ENCODE measurements at regions of chr18 and their contacts with region 1.

Region 1: DNA sequence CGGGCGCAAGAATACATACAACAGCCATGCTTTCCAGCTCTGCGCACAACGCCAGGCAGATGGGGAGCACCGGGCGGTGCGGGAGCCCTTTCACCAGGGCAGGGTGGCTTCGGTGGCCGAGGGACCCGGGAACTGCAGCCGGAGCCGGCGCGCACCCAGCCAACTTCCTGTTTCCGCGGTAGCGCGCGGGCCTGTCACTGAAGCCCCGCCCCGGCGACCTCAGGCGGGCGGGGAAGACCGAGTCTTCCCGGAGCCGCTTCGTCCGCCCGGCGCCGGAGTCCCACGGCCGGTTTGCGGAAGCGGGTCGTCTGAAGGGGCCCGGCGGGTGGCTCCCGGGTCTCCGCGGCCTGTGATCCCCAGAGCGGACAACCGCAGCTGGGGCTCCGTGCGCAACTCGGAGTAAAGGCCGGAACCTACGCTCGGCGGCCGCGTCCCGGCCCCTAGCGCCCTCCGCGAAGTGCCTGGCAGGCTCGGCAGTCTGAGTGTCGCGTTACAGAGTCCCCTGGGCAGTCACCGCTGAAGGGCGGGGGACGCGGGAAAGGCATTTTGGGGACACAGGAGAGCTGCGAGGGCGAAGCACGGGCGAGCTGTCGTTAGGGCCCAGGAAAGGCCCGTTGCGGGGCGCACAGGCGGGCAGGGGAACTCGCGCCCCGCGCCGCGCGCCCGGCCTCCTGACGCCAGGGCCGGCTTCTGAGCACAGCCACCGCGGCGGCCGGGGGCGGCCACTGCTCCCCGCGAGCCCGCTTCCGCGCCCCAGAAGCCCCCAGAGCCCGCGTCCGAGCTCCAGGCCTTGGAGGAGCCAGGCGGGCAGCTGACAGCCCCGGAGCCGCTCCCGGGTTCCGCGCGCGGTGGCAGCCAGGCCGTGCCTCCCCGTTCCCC is at the start of gene MPPE1:
- DNase-seq: peak; percentile 68 to 90 (median 81)
- ATAC-seq: peak; percentile 91 to 94 (median 93)
- H3K4me3 ChIP-seq: peak within 1 kb of the TSS; percentile 91 to 96
- H3K4me3 Mint-ChIP-seq: peak within 1 kb of the TSS; percentile 93 to 95 (median 94)
- H3K27ac ChIP-seq: peak within 1 kb of the TSS; percentile 94
- H3K27ac Mint-ChIP-seq: peak within 1 kb of the TSS; percentile 92 to 94
- H3K4me1 ChIP-seq: peaks cover 4 to 21% of the 10 kb centered on the region in 2 experiments
- H3K4me1 Mint-ChIP-seq: peaks cover 18 to 31% (median 31%) of the 10 kb centered on the region in 3 donors
- H3K27me3 ChIP-seq: no peaks in the 10 kb centered on the region
- H3K27me3 Mint-ChIP-seq: no peaks in the 10 kb centered on the region
- total RNA-seq, gene MPPE1: 56.0 to 90.4 (median 77.2) TPM

Region 2: DNA sequence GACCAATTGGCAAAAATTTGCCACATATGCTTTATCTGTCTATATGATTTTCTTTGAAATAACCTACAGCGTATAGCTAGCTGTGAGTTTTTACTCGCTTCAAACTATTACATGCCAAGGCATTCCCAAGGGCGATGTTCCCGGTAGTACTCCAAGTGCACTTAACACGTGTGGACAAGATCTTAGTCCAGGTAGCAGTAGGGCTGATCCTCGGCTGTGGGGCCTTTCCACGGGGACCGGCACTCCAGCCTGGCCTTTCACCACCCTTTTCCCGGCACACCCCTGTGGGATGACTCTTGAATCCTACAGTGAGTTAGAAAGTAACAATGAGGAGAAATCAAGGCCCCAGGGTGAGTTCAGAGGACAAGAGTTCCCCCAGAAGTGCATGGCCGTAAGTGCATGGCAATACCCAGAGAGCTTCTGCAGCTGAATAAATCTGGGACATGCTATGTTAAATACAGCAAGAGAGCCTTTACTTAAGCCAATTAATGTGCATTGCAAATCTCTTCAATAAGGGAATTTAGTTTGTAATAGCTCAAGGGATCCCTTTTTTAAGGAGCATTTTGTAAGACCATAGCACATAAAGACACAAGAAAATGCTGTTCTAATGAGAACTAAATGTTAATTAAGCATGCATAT is 30.8 kb before region 1 on chr18:
- CTCF ChIA-PET with region 1: no interaction called
- POLR2A ChIA-PET with region 1: no interaction called
- DNase-seq: no peak
- ATAC-seq: no peak
- H3K4me3 ChIP-seq: no peak overlapping the region
- H3K4me3 Mint-ChIP-seq: no peak overlapping the region
- H3K27ac ChIP-seq: no peak overlapping the region
- H3K27ac Mint-ChIP-seq: no peak overlapping the region
- H3K4me1 ChIP-seq: no peaks in the 10 kb centered on the region
- H3K4me1 Mint-ChIP-seq: no peaks in the 10 kb centered on the region
- H3K27me3 ChIP-seq: no peaks in the 10 kb centered on the region
- H3K27me3 Mint-ChIP-seq: no peaks in the 10 kb centered on the region

Region 3: DNA sequence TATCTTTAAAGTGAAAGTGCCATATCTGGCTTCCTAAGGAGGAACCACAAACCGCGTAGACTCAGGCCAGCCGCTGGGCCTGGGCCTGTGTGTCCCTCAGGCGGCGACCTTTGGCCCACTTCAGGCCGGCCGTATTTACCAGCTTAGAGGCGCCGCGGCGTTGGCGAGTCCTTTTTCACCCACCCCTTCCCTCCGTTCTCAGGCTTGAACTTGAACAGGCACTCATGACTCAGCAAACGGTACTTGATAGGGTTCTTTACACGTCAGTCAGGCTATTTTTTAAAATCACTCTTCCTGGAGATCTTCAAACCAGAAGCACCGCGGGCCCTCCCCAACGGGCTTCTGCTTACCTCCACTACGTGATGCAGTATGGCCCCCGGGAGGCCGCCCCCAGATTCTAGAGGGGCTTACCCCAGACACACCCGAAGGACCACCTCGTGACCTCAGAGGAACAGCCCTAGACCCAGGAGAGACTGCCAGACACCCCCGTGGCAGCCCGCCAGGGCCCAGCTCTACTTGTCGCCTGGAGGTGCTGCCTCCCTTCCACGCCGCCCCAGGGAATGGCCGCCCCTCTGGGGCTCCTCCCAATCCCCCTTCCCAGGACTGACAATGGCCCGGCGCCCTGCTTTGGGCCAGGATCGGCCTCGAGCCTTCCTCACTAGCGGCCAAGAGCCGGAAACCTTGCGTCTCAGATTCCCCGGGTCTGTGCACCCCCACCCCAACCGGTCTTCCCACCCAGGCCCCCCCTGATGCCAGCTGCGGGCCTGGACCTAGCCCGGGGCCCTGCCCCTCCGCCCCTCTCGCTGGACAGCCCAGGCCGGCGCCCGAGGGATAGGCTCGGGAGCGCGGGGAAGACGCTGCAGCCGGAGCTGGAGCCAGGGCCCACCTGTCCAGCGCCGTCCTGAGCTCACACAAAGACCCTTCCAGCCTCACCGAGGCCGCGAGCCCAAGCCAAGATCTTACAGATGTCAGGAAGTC is 39.1 kb after region 1 on chr18:
- CTCF ChIA-PET with region 1: interaction called in 1 of 2 experiments, 13 read pairs
- POLR2A ChIA-PET with region 1: interaction called in 1 of 2 experiments, 3 read pairs
- DNase-seq: peak; percentile 20 to 75 (median 44)
- ATAC-seq: peak; percentile 87 to 91 (median 88)
- H3K4me3 ChIP-seq: peak overlapping the region; percentile 58 to 70
- H3K4me3 Mint-ChIP-seq: peak overlapping the region; percentile 76 to 85 (median 84)
- H3K27ac ChIP-seq: peak overlapping the region; percentile 39
- H3K27ac Mint-ChIP-seq: peak overlapping the region; percentile 79 to 82
- H3K4me1 ChIP-seq: peaks cover 0 to 14% of the 10 kb centered on the region in 2 experiments
- H3K4me1 Mint-ChIP-seq: peaks cover 11 to 12% (median 11%) of the 10 kb centered on the region in 3 donors
- H3K27me3 ChIP-seq: peaks cover 0 to 4% of the 10 kb centered on the region in 2 experiments
- H3K27me3 Mint-ChIP-seq: no peaks in the 10 kb centered on the region

Measured in T-cell (primary cell).